Activated CD4-positive, alpha-beta memory T cell treated with anti-CD3 and anti-CD28 coated beads for 36 hours (primary cell): ENCODE measurements at regions of chr5 and their contacts with region 1.

Region 1: DNA sequence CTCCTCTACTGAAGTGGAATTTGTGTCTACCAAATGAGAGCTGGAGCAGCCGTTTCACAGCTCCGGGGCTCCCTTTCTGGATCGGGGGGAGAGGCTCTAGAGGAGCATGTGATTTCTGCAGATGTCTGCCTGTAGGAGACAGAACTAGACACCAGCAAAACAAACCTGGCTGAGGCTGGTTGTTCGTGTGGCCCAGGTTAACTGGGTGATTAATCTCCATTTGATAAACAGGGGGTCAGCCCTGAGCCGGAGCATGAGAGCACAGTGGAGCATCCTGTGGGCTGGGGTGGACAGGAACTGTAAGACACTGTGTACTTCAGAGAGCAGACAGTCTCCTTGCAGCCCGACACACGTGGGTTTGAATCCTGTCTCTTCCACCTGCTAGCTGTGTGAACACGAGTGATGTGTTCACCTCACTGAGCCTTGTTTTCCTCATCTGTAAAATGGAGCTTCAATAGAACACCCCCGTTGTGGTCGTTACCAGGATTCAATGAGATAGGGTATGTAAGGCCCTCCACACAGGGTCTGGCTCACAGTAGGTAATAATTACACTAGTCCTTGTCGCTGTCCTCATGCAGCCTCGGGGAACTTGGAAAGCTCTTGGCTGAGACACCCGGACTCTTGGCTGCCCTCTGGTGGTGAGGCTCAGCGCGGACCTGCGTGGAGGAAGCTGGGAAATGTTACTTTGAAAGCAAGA is 12.9 kb downstream of the CXCL14 start:
- DNase-seq: peak; percentile 77
- H3K4me3 Mint-ChIP-seq: no peak overlapping the region
- H3K27ac Mint-ChIP-seq: no peak overlapping the region
- H3K4me1 Mint-ChIP-seq: peaks cover 1% of the 10 kb centered on the region
- H3K27me3 Mint-ChIP-seq: peaks cover 6% of the 10 kb centered on the region

Region 2: GRCh38 chr5:135457424-135458071 is 108.3 kb before region 1 on chr5:
- CTCF ChIA-PET with region 1: interaction called, 227 read pairs
- POLR2A ChIA-PET with region 1: interaction called, 3 read pairs
- intact Hi-C with region 1: no loop called
- DNase-seq: peak; percentile 75
- H3K4me3 Mint-ChIP-seq: no peak overlapping the region
- H3K27ac Mint-ChIP-seq: no peak overlapping the region
- H3K4me1 Mint-ChIP-seq: no peaks in the 10 kb centered on the region
- H3K27me3 Mint-ChIP-seq: peaks cover 14% of the 10 kb centered on the region

Region 3: GRCh38 chr5:135466178-135467050 is 99.5 kb before region 1 on chr5:
- CTCF ChIA-PET with region 1: interaction called, 227 read pairs
- POLR2A ChIA-PET with region 1: no interaction called
- intact Hi-C with region 1: no loop called
- DNase-seq: peak; percentile 82
- H3K4me3 Mint-ChIP-seq: no peak overlapping the region
- H3K27ac Mint-ChIP-seq: no peak overlapping the region
- H3K4me1 Mint-ChIP-seq: peaks cover 5% of the 10 kb centered on the region
- H3K27me3 Mint-ChIP-seq: peaks cover 30% of the 10 kb centered on the region

Region 4: DNA sequence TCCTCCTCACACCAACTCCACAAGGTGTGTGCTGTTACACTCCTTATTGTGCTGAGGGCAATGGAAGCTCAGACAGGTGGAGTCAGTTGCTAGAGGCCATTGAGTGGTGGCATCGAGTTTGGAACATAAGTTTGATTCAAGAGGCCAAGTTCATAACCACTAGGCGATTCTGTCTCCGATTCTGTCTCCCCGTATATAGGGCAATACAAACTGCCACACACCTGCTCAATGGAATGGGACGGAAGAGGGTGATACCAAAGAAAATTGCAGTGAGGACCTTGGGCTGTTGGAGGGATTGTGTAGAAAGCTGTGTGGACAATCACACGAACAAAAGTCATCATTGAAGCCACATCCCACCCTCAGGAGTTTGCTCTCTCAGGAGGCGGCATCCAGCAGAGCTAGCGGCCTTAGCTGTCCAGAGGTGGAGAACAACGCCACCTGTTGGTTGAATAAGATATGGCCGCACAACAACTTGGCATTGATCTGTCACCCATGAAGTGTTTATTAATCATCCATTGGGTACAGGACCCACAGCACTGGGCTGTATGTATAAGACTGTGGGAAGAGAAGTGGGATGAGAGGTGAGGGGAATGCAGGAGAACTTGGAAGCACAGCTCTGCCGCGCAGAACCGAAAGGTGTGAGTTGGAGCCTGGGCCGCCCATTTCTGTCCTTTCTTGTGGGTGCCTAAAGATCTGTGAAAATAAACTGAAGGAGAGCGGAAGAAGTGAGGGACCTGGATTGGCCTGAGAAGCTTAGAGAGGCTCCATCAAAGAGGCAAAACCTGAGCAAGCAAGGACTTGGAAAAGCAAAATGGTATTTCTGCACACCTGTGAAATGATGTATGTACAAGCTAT is 14.1 kb before region 1 on chr5:
- CTCF ChIA-PET with region 1: interaction called, 108 read pairs
- POLR2A ChIA-PET with region 1: no interaction called
- intact Hi-C with region 1: no loop called
- DNase-seq: peak; percentile 73
- H3K4me3 Mint-ChIP-seq: no peak overlapping the region
- H3K27ac Mint-ChIP-seq: no peak overlapping the region
- H3K4me1 Mint-ChIP-seq: no peaks in the 10 kb centered on the region
- H3K27me3 Mint-ChIP-seq: peaks cover 54% of the 10 kb centered on the region

Region 5: GRCh38 chr5:135578685-135579341 is 12.9 kb after region 1 on chr5 and contains the start of gene CXCL14:
- CTCF ChIA-PET with region 1: interaction called, 43 read pairs
- POLR2A ChIA-PET with region 1: no interaction called
- intact Hi-C with region 1: no loop called
- DNase-seq: peak; percentile 18
- H3K4me3 Mint-ChIP-seq: no peak within 1 kb of the TSS
- H3K27ac Mint-ChIP-seq: no peak within 1 kb of the TSS
- H3K4me1 Mint-ChIP-seq: no peaks in the 10 kb centered on the region
- H3K27me3 Mint-ChIP-seq: peaks cover 40% of the 10 kb centered on the region
- total RNA-seq, gene CXCL14: not detected

Region 6: GRCh38 chr5:135584918-135585317 is 19.0 kb after region 1 on chr5:
- CTCF ChIA-PET with region 1: interaction called, 43 read pairs
- POLR2A ChIA-PET with region 1: no interaction called
- intact Hi-C with region 1: no loop called
- DNase-seq: no peak
- H3K4me3 Mint-ChIP-seq: no peak overlapping the region
- H3K27ac Mint-ChIP-seq: no peak overlapping the region
- H3K4me1 Mint-ChIP-seq: no peaks in the 10 kb centered on the region
- H3K27me3 Mint-ChIP-seq: peaks cover 21% of the 10 kb centered on the region

Region 7: DNA sequence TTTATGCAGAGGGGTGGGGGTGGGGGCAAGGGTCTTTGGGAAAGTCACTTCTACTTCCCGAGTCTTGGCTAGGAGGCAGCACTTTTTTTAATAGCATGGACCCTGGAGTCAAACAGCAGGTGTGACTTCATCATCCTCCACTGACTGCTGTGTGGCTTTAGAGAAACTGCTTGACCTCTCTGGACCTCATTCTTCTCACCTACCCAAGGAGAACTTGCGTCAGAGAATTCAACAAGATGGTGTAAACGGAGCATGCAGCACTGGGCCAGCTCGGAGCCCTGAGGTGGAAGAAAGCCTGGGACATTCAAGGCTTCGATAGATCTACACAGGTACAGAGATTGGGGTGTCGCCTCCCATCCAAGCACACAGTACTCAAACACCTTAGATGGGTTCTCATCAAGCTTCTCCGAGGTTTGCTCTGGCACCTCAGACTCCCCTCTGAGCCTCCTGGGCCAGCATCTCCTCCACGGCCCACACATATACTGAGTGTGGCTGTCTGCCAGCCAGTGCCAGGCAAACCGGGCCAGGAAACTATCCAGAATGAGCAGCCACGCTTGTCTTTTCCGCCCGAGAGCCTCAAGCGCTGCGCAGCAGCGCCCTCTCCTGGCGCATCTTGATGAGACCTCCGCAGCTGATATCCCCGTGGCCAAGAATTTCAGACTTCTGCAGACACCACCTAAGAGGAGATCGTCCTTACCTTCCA is 264.0 kb after region 1 on chr5:
- CTCF ChIA-PET with region 1: interaction called, 17 read pairs
- POLR2A ChIA-PET with region 1: no interaction called
- intact Hi-C with region 1: loop called (anchors 1 kb)
- DNase-seq: peak; percentile 64
- H3K4me3 Mint-ChIP-seq: no peak overlapping the region
- H3K27ac Mint-ChIP-seq: no peak overlapping the region
- H3K4me1 Mint-ChIP-seq: peaks cover 6% of the 10 kb centered on the region
- H3K27me3 Mint-ChIP-seq: peaks cover 41% of the 10 kb centered on the region